AG04450 (cell line): ENCODE measurements at regions of chr14 and their contacts with region 1.

Region 1: DNA sequence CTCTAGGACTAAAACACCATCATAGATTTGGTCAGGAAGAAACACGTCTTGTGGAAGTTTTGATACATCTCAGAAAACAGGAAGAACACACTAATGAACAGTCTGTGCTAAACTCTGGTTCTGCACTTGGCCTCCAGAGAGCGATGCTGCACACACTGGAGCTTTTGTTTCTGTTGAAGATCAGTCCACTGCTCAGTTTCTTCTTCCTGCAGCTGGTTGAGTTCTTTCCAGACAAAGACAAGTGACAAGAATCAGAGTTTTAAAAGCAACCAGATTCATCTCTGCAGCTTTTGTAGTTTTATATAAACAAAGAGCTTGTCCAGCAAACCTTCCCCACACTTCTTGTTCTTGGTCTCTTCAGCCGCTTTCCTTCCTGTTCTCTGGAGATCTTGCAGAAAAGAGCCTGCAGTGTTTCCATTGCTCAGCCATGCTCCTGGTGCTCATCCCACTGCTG is 229.1 kb upstream of the OR4E1 start:
- DNase-seq: no peak
- H3K4me3 ChIP-seq: no peak overlapping the region
- H3K27ac ChIP-seq: no peak overlapping the region
- H3K27me3 ChIP-seq: no peaks in the 10 kb centered on the region
- CTCF ChIP-seq: peak; percentile 29

Region 2: GRCh38 chr14:21780429-21781084 is 122.1 kb before region 1 on chr14:
- CTCF ChIA-PET with region 1: no interaction called
- POLR2A ChIA-PET with region 1: no interaction called
- DNase-seq: no peak
- H3K4me3 ChIP-seq: no peak overlapping the region
- H3K27ac ChIP-seq: no peak overlapping the region
- H3K27me3 ChIP-seq: no peaks in the 10 kb centered on the region
- CTCF ChIP-seq: no peak

Region 3: GRCh38 chr14:21917699-21918436 is 15.2 kb after region 1 on chr14:
- CTCF ChIA-PET with region 1: interaction called, 20 read pairs
- POLR2A ChIA-PET with region 1: no interaction called
- DNase-seq: peak; percentile 8
- H3K4me3 ChIP-seq: no peak overlapping the region
- H3K27ac ChIP-seq: no peak overlapping the region
- H3K27me3 ChIP-seq: no peaks in the 10 kb centered on the region
- CTCF ChIP-seq: peak; percentile 86